HepG2 (cell line): ENCODE measurements at regions of chr17 and their contacts with region 1.

Region 1: DNA sequence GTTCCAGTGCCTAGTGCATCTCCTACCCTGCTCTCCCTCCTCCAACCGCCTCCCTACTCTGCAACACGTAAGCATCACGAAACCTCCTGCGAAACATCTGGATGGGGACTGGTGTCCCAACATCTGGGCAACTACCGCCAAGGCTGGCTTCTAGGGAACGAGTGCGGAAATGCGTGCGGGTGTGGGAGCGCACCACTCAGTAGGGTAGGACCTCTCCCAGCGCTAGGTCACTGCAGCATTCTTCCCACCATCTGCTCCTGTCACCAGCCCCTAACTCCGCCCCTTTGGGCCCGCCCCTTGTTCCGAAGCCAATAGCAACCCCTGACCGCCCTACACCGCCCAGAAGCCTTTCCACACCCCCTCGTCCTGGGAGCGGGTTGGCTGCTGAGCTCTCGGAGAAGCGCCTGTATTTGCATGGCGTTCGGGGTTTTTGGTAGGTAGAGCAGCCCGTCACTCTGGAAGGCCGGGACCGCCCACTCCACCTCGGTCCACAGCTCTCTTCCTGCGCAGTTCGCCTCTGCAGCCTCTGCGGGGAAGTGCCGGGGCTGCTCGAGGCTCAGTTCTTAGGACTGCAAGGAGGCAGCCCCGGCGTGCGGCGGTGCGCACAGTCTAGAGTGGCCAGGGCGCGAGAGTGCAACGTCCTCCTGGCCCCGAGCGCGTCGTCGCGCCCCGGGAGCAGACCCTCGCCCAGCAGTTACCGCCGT is at the start of gene HS3ST3B1:
- DNase-seq: peak; percentile 99
- ATAC-seq: peak; percentile 83
- H3K4me3 ChIP-seq: peak within 1 kb of the TSS; percentile 92 to 99 (median 99)
- H3K27ac ChIP-seq: peak within 1 kb of the TSS; percentile 93
- H3K4me1 ChIP-seq: peaks cover 17% of the 10 kb centered on the region
- H3K27me3 ChIP-seq: peaks cover 0 to 10% of the 10 kb centered on the region in 2 experiments; a peak in 2 of 5 replicates
- CTCF ChIP-seq: peak; percentile 37; the same call in 1 of the 2 replicates
- EP300 ChIP-seq: peak in 1 of 2 experiments; percentile 12; a peak in 1 of 4 replicates
- POLR2A ChIP-seq: peak; percentile 93 to 94
- RAD21 ChIP-seq: peak; percentile 60; the same call in 1 of the 2 replicates
- total RNA-seq, gene HS3ST3B1: 35.3 and 39.5 TPM in 2 replicates

Region 2: GRCh38 chr17:14069251-14070021 is 231.3 kb before region 1 on chr17 and contains the start of gene COX10:
- CTCF ChIA-PET with region 1: no interaction called
- POLR2A ChIA-PET with region 1: interaction called, 9 read pairs
- in situ Hi-C with region 1: no loop called
- intact Hi-C with region 1: loop called (anchors 5 kb)
- DNase-seq: peak; percentile 86
- ATAC-seq: peak; percentile 99
- H3K4me3 ChIP-seq: peak within 1 kb of the TSS; percentile 88 to 99 (median 92)
- H3K27ac ChIP-seq: peak within 1 kb of the TSS; percentile 84
- H3K4me1 ChIP-seq: peaks cover 23% of the 10 kb centered on the region
- H3K27me3 ChIP-seq: no peaks in the 10 kb centered on the region; a peak in 1 of 5 replicates
- CTCF ChIP-seq: no peak; the same call in 1 of the 2 replicates
- EP300 ChIP-seq: no peak
- POLR2A ChIP-seq: peak; percentile 88 to 97
- RAD21 ChIP-seq: peak; percentile 39
- total RNA-seq, gene COX10: 20.1 and 20.6 TPM in 2 replicates

Region 3: GRCh38 chr17:14156689-14157088 is 144.0 kb before region 1 on chr17:
- CTCF ChIA-PET with region 1: no interaction called
- POLR2A ChIA-PET with region 1: no interaction called
- in situ Hi-C with region 1: no loop called
- intact Hi-C with region 1: no loop called
- DNase-seq: peak; percentile 83
- ATAC-seq: peak; percentile 98
- H3K4me3 ChIP-seq: no peak overlapping the region
- H3K27ac ChIP-seq: peak overlapping the region; percentile 29
- H3K4me1 ChIP-seq: peaks cover 18% of the 10 kb centered on the region
- H3K27me3 ChIP-seq: no peaks in the 10 kb centered on the region
- CTCF ChIP-seq: no peak
- EP300 ChIP-seq: no peak
- POLR2A ChIP-seq: no peak
- RAD21 ChIP-seq: no peak

Region 4: DNA sequence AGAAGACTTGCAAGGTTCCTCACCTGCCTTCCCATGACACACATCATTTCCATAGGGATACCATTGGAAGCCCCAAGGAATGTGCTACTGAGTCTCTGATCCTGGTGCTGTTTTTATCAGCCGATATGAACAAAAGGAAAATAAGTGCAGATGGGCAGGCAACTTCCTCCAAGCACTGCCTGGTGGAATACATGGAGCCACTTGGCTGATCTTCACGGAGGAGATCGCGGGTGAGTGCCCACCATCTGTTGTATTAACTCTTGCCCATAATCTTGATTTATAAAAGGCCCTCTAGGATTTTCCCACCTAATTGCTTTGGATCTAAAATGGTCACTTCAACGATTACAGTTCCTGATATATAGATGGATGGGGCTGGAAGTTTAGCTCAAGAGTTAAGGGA is 39.3 kb before region 1 on chr17:
- CTCF ChIA-PET with region 1: no interaction called
- POLR2A ChIA-PET with region 1: no interaction called
- in situ Hi-C with region 1: no loop called
- intact Hi-C with region 1: no loop called
- DNase-seq: no peak
- ATAC-seq: no peak
- H3K4me3 ChIP-seq: no peak overlapping the region
- H3K27ac ChIP-seq: no peak overlapping the region
- H3K4me1 ChIP-seq: no peaks in the 10 kb centered on the region
- H3K27me3 ChIP-seq: peaks cover 0 to 30% of the 10 kb centered on the region in 2 experiments; a peak in 2 of 5 replicates
- CTCF ChIP-seq: no peak
- EP300 ChIP-seq: no peak
- POLR2A ChIP-seq: no peak
- RAD21 ChIP-seq: no peak

Region 5: GRCh38 chr17:14276535-14277250 is 24.0 kb before region 1 on chr17:
- CTCF ChIA-PET with region 1: no interaction called
- POLR2A ChIA-PET with region 1: interaction called, 40 read pairs
- in situ Hi-C with region 1: no loop called
- intact Hi-C with region 1: no loop called
- DNase-seq: peak; percentile 84
- ATAC-seq: peak; percentile 91
- H3K4me3 ChIP-seq: no peak overlapping the region
- H3K27ac ChIP-seq: peak overlapping the region; percentile 39
- H3K4me1 ChIP-seq: peaks cover 37% of the 10 kb centered on the region
- H3K27me3 ChIP-seq: peaks cover 0 to 8% of the 10 kb centered on the region in 2 experiments; a peak in 3 of 5 replicates
- CTCF ChIP-seq: no peak
- EP300 ChIP-seq: peak in 1 of 2 experiments; percentile 79; a peak in 1 of 4 replicates
- POLR2A ChIP-seq: no peak
- RAD21 ChIP-seq: no peak

Region 6: DNA sequence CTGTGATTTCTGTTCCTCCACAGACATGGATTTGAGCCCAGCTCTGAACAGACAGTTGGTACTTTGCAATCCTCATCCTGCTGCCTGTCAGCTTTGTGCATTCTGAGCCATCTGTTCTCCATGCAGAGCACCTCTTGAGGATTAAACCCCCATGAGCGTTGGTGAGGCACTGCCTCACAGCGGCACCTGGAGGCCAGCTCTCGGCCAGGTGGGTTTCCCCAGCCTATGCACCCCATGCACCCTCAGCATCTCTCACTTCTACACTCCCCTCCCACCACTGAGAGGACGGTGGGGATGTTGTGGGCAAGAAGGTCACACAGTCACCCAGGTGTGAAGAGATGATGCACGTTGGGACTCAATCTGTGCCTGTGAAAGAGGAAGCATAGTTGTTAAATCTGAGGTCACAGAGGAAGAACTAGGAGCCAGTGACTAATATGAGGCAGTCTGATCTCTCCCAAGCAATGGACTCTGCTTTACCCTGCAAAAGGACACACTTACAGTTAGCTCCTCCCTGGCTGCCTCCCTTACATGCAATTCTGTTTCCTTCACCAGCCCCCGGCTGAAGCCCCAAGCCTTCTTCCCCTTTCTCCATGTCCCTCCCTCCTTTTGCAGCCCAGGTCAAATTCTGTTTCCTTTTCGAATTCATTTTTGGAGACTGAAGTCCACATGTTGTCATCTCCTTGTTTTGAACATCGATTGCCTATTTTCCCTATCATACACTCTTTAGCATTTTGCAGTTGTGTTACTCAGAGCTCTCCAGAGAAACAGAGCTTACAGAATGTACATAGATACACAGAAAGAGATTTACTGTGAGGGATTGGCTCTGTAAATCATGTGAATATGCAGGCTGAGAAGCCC is 58.7 kb after region 1 on chr17:
- CTCF ChIA-PET with region 1: no interaction called
- POLR2A ChIA-PET with region 1: interaction called, 13 read pairs
- in situ Hi-C with region 1: no loop called
- intact Hi-C with region 1: no loop called
- DNase-seq: peak; percentile 52
- ATAC-seq: peak; percentile 64
- H3K4me3 ChIP-seq: peak overlapping the region in 1 of 3 experiments; percentile 17; a peak in 1 of 6 replicates
- H3K27ac ChIP-seq: peak overlapping the region; percentile 61
- H3K4me1 ChIP-seq: peaks cover 63% of the 10 kb centered on the region
- H3K27me3 ChIP-seq: no peaks in the 10 kb centered on the region
- CTCF ChIP-seq: peak; percentile 68
- EP300 ChIP-seq: no peak
- POLR2A ChIP-seq: no peak
- RAD21 ChIP-seq: no peak